ENCODE measurements at regions of chr5 and their contacts with region 1.

Region 1: GRCh38 chr5:107930092-107930491 is 259.4 kb upstream of the EFNA5 start:
- DNase-seq: no peak

Region 2: DNA sequence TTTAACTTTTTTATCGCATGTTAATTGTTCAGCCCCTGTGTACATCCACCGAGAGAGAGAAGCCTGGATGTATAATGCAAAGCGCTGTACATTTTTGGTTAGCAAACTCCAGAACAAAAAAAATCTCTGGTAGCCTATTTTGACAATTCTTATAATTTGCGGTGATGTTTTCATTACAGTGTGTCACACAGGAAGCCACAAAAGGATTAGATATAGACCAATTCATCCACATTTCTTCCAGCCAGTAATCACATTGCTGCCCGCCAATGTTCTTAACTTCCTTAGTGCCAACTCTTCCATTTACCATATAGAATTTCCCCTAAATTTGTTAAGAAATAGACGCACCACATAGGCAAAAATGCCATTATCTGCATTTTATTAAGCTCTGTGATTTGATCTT is 694.9 kb before region 1 on chr5:
- intact Hi-C with region 1: loop called in 1 of 2 experiments (anchors 5 kb)
- DNase-seq: no peak

Region 3: DNA sequence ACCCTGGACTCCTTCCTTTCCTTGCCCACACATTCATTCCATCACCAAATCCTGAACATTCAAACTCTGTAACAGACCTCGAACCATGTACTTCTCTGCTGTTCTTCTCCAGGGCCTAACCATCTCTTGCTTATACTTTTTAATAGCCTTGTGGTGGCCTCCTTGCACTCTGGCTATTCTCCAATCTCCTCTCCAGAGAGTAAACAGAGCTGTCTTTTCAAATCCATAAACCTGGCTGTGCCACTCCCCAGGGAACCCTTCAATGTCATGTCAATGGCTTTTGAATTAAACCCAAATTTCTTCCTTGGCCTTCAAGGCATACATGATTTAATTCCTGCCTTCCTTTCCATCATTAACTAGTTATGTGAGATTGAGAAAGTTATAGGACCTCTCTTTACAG is 18.3 kb after region 1 on chr5:
- intact Hi-C with region 1: no loop called
- DNase-seq: no peak

Region 4: DNA sequence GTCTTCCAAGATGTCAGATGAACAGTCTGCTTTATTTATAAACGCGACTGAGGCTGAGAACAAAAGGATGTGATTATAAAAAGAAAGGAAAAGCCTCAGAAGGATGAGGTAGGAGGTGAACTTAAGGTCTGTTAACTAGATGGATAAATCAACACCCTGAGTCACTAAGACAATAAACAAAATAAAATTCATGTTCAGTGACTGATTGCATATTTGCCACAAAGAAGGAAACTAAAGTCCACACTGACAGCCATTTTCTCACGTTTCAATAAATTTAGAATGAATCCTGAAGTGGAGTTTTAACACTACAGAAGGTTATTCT is 67.5 kb after region 1 on chr5:
- intact Hi-C with region 1: loop called in 1 of 2 experiments (anchors 2 kb)
- DNase-seq: no peak

Region 5: DNA sequence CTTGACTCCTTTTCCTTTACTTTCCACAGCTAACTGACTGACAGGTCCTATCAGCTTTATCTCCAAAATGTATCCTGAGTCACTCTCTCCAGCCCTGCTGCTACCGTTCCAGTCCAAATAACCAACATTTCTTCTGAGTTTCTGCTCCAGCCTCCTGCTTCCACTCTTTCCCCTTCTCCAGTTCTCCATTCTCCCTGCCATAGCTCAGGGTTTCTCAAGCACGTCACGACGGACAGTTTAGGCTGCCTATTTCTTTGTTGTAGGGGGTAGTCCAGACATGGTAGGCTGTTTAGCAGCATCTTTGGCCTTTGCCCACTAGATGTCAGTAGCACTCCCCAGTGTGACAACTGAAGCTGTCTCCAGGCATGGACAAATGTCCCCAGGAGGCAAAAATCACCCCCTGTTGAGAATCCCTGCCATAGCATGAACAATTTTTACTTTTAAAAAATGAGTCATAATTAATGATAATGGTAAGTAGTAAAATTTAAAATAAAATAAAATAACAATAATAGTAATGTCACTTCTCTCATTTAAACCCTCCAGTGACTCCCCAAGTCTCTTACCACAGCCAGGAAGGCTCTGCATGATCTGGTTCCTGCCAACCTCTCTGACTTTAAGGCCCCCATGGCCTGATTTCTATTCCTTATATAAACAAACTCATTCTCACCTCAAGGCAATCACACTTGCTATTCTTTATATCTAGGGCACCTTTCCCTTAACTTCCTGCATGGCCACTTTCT is 712.2 kb after region 1 on chr5:
- intact Hi-C with region 1: no loop called
- DNase-seq: peak; percentile 82

Measured in posterior vena cava (tissue), 2 donors.